ENCODE measurements at regions of chr22 and their contacts with region 1.

Region 1: GRCh38 chr22:17171313-17172171 is 12.5 kb upstream of the HDHD5 start:
- DNase-seq: peak; percentile 95
- ATAC-seq: peak; percentile 85
- H3K4me3 Mint-ChIP-seq: peak overlapping the region; percentile 67
- H3K27ac Mint-ChIP-seq: peak overlapping the region; percentile 96
- H3K4me1 Mint-ChIP-seq: peaks cover 19% of the 10 kb centered on the region
- H3K27me3 Mint-ChIP-seq: peaks cover 3% of the 10 kb centered on the region; the same call in 1 of the 2 replicates
- CTCF ChIP-seq: peak; percentile 94

Region 2: DNA sequence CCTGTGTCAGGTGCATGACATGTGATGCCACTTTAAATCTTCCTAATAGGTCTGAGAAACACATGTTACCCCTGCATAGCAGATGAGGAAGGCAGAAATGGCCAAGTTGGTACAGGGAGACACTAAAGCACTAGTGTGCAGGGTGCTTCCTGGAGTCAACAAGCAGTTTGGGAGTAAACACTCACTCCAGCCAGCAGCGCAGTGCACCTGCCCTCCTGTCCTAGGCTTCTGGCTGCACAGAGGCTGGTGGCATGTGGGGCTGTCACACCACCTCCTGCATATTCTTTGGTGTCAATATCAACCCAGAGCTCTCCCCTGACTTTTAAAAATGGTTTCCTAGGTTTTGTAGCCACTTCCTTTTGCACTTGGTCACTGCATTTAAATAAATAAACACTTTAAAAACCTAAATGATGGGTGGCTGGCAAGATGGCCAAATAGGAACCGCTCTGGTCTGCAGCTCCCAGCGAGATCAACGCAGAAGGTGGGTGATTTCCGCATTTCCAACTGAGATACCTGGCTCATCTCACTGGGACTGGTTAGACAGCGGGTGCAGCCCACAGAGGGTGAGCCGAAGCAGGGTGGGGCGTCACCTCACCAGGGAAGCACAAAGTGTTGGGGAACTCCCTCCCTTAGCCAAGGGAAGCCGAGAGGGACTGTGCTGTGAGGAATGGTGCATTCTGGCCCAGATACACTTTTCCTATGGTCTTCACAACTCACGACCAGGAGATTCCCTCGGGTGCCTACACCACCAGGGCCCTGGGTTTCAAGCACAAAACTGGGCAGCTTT is 197.1 kb before region 1 on chr22:
- CTCF ChIA-PET with region 1: no interaction called
- POLR2A ChIA-PET with region 1: no interaction called
- DNase-seq: no peak
- ATAC-seq: no peak
- H3K4me3 Mint-ChIP-seq: no peak overlapping the region
- H3K27ac Mint-ChIP-seq: no peak overlapping the region
- H3K4me1 Mint-ChIP-seq: no peaks in the 10 kb centered on the region
- H3K27me3 Mint-ChIP-seq: peaks cover 27% of the 10 kb centered on the region
- CTCF ChIP-seq: no peak

Region 3: GRCh38 chr22:17121227-17122195 is 50.0 kb before region 1 on chr22 and contains the start of gene TMEM121B:
- CTCF ChIA-PET with region 1: interaction called, 29 read pairs
- POLR2A ChIA-PET with region 1: no interaction called
- DNase-seq: peak; percentile 94
- ATAC-seq: peak; percentile 74
- H3K4me3 Mint-ChIP-seq: peak within 1 kb of the TSS; percentile 76
- H3K27ac Mint-ChIP-seq: peak within 1 kb of the TSS; percentile 44
- H3K4me1 Mint-ChIP-seq: peaks cover 24% of the 10 kb centered on the region
- H3K27me3 Mint-ChIP-seq: peaks cover 3% of the 10 kb centered on the region; the same call in 1 of the 2 replicates
- CTCF ChIP-seq: no peak
- total RNA-seq, gene TMEM121B: 7.5 to 8.3 TPM (median 7.7 TPM) in 3 replicates

Region 4: DNA sequence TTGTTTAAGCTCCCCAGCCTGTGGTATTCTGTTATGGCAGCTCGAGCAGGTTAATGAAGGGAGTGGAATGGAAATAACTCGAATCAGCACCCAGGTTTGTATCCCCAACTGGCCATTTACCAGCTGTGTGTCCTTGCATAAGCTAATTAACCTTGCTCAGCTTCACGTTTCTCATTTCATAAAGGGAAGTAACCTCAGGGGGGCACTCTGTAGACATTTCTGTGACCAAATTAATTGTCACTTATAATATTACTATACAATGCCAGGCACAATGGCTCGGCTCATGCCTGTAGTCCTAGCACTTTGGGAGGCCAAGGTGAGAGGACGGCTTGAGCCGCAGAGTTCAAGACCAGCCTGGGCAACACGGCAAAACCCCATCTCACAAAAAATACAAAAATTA is 33.9 kb after region 1 on chr22:
- CTCF ChIA-PET with region 1: interaction called, 215 read pairs
- POLR2A ChIA-PET with region 1: interaction called, 3 read pairs
- DNase-seq: no peak
- ATAC-seq: no peak
- H3K4me3 Mint-ChIP-seq: no peak overlapping the region
- H3K27ac Mint-ChIP-seq: 0 out of 2 replicates have a peak overlapping the region, but pooled peaks have one; percentile 70
- H3K4me1 Mint-ChIP-seq: peaks cover 35% of the 10 kb centered on the region
- H3K27me3 Mint-ChIP-seq: peaks cover 7% of the 10 kb centered on the region; the same call in 1 of the 2 replicates
- CTCF ChIP-seq: no peak

Region 5: DNA sequence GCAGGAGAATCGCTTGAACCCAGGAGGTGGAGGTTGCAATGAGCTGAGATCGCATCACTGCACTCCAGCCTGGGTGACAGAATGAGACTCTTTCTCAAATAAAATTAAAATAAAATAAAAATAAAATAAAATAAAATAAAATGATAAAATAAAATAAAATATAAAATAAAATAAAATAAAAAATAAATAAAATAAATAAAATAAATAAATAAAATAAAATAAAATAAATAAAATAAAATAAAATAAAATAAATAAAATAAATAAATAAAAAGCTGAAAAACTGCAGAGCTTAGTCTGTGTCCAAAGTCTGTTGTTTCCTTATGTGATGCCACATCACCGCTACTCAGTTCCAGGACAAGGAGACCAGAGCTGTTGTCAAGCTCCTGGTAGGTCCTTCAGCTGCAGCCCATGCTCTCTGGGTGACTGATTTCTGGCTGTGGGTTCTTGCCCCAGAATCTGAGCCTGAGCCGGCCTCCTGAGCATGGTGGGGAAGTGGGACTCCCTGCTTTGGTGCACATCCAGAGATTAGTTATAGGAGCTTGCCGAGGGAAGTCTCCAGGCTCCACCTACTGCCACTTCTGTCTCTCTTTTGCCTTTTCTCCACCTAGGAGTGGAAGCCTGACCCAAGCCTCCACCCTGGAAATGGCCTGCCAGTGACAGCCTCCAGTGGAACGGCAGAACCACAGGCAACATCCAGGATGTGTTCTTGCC is 79.0 kb after region 1 on chr22:
- CTCF ChIA-PET with region 1: interaction called, 80 read pairs
- POLR2A ChIA-PET with region 1: no interaction called
- DNase-seq: no peak
- ATAC-seq: peak; percentile 38; the same call in 1 of the 2 replicates
- H3K4me3 Mint-ChIP-seq: no peak overlapping the region
- H3K27ac Mint-ChIP-seq: peak overlapping the region; percentile 91
- H3K4me1 Mint-ChIP-seq: peaks cover 6% of the 10 kb centered on the region
- H3K27me3 Mint-ChIP-seq: no peaks in the 10 kb centered on the region
- CTCF ChIP-seq: no peak

Region 6: GRCh38 chr22:17339095-17339693 is 167.7 kb after region 1 on chr22:
- CTCF ChIA-PET with region 1: interaction called, 12 read pairs
- POLR2A ChIA-PET with region 1: no interaction called
- DNase-seq: no peak
- ATAC-seq: no peak
- H3K4me3 Mint-ChIP-seq: no peak overlapping the region
- H3K27ac Mint-ChIP-seq: peak overlapping the region; percentile 21; the same call in 1 of the 2 replicates
- H3K4me1 Mint-ChIP-seq: peaks cover 11% of the 10 kb centered on the region
- H3K27me3 Mint-ChIP-seq: no peaks in the 10 kb centered on the region
- CTCF ChIP-seq: no peak

Region 7: GRCh38 chr22:17486313-17486712 is 314.8 kb after region 1 on chr22:
- CTCF ChIA-PET with region 1: interaction called, 12 read pairs
- POLR2A ChIA-PET with region 1: no interaction called
- DNase-seq: no peak
- ATAC-seq: peak; percentile 52
- H3K4me3 Mint-ChIP-seq: no peak overlapping the region
- H3K27ac Mint-ChIP-seq: 0 out of 2 replicates have a peak overlapping the region, but pooled peaks have one; percentile 64
- H3K4me1 Mint-ChIP-seq: peaks cover 36% of the 10 kb centered on the region
- H3K27me3 Mint-ChIP-seq: no peaks in the 10 kb centered on the region
- CTCF ChIP-seq: no peak